IMR-90 (cell line): ENCODE measurements at regions of chr1 and their contacts with region 1.

Region 1: DNA sequence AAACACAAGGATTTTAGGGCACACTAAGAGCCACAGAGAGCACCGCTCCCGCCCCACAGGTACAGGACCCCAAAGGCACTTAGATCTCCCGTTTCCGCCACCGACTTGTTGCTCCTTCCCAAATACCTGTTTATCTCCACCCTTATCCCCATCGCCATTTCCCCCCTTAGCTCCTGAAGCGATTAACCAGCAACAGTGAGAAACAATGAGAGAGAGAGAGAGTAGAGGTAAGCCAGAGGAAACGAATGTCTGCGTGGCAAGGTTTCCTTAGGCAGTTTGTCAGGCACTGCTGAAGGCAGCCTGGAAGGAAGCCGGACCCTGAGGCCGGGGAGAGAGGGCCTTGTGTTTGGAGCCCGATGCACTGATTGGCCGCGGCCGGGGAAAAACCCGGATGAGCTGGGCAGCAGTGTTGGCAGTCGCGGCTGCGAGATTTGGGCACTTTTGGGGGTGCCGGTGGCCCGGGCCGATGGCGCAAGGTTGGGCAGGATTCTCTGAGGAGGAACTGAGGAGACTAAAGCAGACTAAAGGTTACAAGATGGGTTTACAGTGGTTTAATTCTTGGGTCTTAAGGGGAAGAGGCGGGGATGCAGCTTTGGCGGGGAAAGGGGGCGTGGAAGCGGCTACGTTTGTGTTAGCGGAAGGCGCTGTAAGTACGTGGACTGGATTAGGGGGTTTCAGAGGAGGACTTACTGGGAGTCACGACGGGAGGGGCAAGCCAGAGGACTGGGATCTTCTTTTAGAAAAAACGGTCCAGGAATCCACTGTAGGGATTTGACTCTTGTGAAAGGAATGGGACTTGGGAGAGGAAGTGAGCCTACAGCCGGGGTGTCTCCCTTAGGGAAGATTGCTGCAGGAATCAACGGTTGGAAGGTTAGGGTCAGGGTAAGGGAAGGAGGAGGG is at the start of gene GORAB:
- DNase-seq: peak; percentile 97
- ATAC-seq: peak; percentile 96
- H3K4me3 ChIP-seq: peak within 1 kb of the TSS; percentile 62
- H3K27ac ChIP-seq: peak within 1 kb of the TSS; percentile 85
- H3K4me1 ChIP-seq: no peaks in the 10 kb centered on the region; the same call in 1 of the 2 replicates
- H3K27me3 ChIP-seq: no peaks in the 10 kb centered on the region
- CTCF ChIP-seq: no peak
- POLR2A ChIP-seq: peak; percentile 95
- RAD21 ChIP-seq: peak; percentile 35
- total RNA-seq, gene GORAB: 11.3 and 17.2 TPM in 2 replicates

Region 2: DNA sequence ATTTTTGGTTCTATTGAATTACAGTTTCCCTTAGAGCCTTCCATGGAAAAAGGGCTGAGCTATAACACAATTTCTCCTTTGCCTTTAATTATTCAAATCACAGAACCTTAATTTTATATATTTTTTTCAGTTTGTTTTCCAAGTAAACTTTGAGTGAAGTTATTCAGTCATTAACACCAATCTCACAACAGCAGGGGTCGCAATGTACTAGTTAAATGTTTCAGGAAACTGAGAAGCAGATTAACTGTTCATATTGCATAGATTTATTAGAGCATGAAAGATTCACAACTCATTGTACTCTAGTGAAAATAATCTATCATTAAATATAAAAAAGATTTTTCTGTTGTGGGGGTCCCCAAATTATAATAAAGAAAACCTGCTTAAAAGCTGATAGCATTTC is 521.6 kb before region 1 on chr1:
- CTCF ChIA-PET with region 1: interaction called, 3 read pairs
- POLR2A ChIA-PET with region 1: no interaction called
- dilution Hi-C with region 1: no loop called
- in situ Hi-C with region 1: no loop called
- intact Hi-C with region 1: loop called (anchors 1 kb)
- DNase-seq: peak; percentile 55
- ATAC-seq: peak; percentile 56
- H3K4me3 ChIP-seq: no peak overlapping the region
- H3K27ac ChIP-seq: no peak overlapping the region
- H3K4me1 ChIP-seq: no peaks in the 10 kb centered on the region
- H3K27me3 ChIP-seq: no peaks in the 10 kb centered on the region
- CTCF ChIP-seq: peak; percentile 52
- POLR2A ChIP-seq: no peak
- RAD21 ChIP-seq: peak; percentile 58

Region 3: GRCh38 chr1:170168265-170168664 is 363.7 kb before region 1 on chr1:
- CTCF ChIA-PET with region 1: no interaction called
- POLR2A ChIA-PET with region 1: no interaction called
- dilution Hi-C with region 1: no loop called
- in situ Hi-C with region 1: no loop called
- intact Hi-C with region 1: loop called (anchors 5 kb)
- DNase-seq: peak; percentile 64
- ATAC-seq: peak; percentile 46; the same call in 1 of the 2 replicates
- H3K4me3 ChIP-seq: no peak overlapping the region
- H3K27ac ChIP-seq: no peak overlapping the region
- H3K4me1 ChIP-seq: 0 out of 2 replicates have a peak, but pooled peaks cover 2% of the 10 kb centered on the region
- H3K27me3 ChIP-seq: no peaks in the 10 kb centered on the region
- CTCF ChIP-seq: no peak
- POLR2A ChIP-seq: no peak
- RAD21 ChIP-seq: no peak

Region 4: DNA sequence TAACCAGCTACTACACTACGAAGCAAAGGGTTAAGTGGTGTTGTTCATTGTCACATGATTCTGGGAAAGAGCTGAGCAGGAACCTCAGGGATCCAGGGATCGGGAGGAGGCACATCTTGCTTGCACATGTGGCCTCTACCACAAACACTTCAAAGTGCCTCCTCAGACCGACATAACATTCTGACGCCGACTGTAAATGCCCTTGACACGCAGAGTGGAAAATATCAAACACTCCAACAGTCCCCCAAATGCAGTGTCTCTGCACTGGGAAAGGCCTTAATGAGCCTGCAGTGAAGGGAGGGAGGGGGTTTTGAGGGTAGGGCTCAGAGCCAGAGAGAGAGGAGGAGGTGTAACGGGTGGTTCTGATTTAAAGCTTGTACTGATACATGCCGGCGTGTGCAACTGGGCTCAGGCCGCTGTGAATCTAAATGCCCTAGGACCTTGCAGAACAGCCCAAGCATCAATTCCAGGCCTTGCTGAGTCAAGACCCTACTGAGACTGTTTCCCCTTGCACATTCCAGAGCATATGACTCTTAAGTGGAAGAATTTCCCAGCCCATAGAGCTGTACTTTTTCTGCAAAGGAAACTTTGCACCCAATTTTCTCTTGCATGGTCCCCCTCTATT is 222.5 kb before region 1 on chr1:
- CTCF ChIA-PET with region 1: no interaction called
- POLR2A ChIA-PET with region 1: interaction called, 3 read pairs
- dilution Hi-C with region 1: no loop called
- in situ Hi-C with region 1: no loop called
- intact Hi-C with region 1: loop called (anchors 1 kb)
- DNase-seq: peak; percentile 95
- ATAC-seq: peak; percentile 99
- H3K4me3 ChIP-seq: no peak overlapping the region
- H3K27ac ChIP-seq: peak overlapping the region; percentile 90
- H3K4me1 ChIP-seq: peaks cover 11% of the 10 kb centered on the region
- H3K27me3 ChIP-seq: no peaks in the 10 kb centered on the region
- CTCF ChIP-seq: no peak
- POLR2A ChIP-seq: no peak
- RAD21 ChIP-seq: no peak

Region 5: GRCh38 chr1:170448661-170449158 is 83.3 kb before region 1 on chr1:
- CTCF ChIA-PET with region 1: no interaction called
- POLR2A ChIA-PET with region 1: no interaction called
- dilution Hi-C with region 1: no loop called
- in situ Hi-C with region 1: no loop called
- intact Hi-C with region 1: no loop called
- DNase-seq: no peak
- ATAC-seq: no peak
- H3K4me3 ChIP-seq: no peak overlapping the region
- H3K27ac ChIP-seq: no peak overlapping the region
- H3K4me1 ChIP-seq: no peaks in the 10 kb centered on the region; the same call in 1 of the 2 replicates
- H3K27me3 ChIP-seq: no peaks in the 10 kb centered on the region
- CTCF ChIP-seq: no peak
- POLR2A ChIP-seq: no peak
- RAD21 ChIP-seq: no peak

Region 6: GRCh38 chr1:170765712-170766330 is 233.8 kb after region 1 on chr1:
- CTCF ChIA-PET with region 1: no interaction called
- POLR2A ChIA-PET with region 1: no interaction called
- dilution Hi-C with region 1: no loop called
- in situ Hi-C with region 1: no loop called
- intact Hi-C with region 1: loop called (anchors 2 kb)
- DNase-seq: peak; percentile 64
- ATAC-seq: peak; percentile 87
- H3K4me3 ChIP-seq: no peak overlapping the region
- H3K27ac ChIP-seq: no peak overlapping the region
- H3K4me1 ChIP-seq: no peaks in the 10 kb centered on the region
- H3K27me3 ChIP-seq: no peaks in the 10 kb centered on the region
- CTCF ChIP-seq: peak; percentile 75
- POLR2A ChIP-seq: no peak
- RAD21 ChIP-seq: peak; percentile 84

Region 7: GRCh38 chr1:171226747-171227370 is 694.9 kb after region 1 on chr1:
- CTCF ChIA-PET with region 1: no interaction called
- POLR2A ChIA-PET with region 1: no interaction called
- dilution Hi-C with region 1: no loop called
- in situ Hi-C with region 1: no loop called
- intact Hi-C with region 1: loop called (anchors 10 kb)
- DNase-seq: peak; percentile 80
- ATAC-seq: peak; percentile 93
- H3K4me3 ChIP-seq: no peak overlapping the region
- H3K27ac ChIP-seq: no peak overlapping the region
- H3K4me1 ChIP-seq: peaks cover 2% of the 10 kb centered on the region
- H3K27me3 ChIP-seq: no peaks in the 10 kb centered on the region
- CTCF ChIP-seq: peak; percentile 95
- POLR2A ChIP-seq: no peak
- RAD21 ChIP-seq: peak; percentile 99